Heart right ventricle (tissue), 16 donors: ENCODE measurements at regions of chr6 and their contacts with region 1.

Region 1: GRCh38 chr6:69542494-69542893 is 254.3 kb downstream of the LMBRD1 start:
- DNase-seq: no peak
- ATAC-seq: no peak
- H3K4me3 ChIP-seq: no peak overlapping the region
- H3K27ac ChIP-seq: no peak overlapping the region
- H3K4me1 ChIP-seq: no peaks in the 10 kb centered on the region
- H3K27me3 ChIP-seq: no peaks in the 10 kb centered on the region
- CTCF ChIP-seq: no peak

Region 2: DNA sequence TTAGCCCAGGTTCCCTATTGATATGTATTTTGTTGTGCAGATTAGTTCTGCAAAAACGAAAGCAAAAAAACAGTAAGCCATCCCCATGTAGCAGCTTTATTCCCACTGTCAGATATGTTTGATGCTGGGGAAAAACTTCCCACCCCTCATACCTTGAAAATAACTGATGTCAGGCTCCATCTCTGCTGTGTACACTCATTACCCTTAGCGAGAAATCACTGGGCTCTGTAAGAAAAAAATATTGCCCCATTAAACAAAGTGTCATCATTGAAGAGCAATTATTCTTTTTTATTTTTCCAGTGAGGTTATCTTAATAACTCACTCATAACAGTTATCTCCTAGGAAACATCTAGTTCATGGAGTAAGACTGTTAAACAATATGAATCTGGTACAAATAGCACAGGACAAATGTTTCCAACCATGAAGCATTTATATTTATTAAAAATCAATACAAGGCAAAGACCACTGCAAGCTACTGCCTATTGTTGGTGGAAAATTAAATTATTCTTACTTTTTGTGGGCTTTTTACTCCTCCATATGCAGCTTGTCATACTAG is 14.5 kb before region 1 on chr6:
- intact Hi-C with region 1: loop called in 1 of 10 experiments (anchors 1 kb)
- DNase-seq: no peak
- ATAC-seq: no peak
- H3K4me3 ChIP-seq: no peak overlapping the region
- H3K27ac ChIP-seq: no peak overlapping the region
- H3K4me1 ChIP-seq: no peaks in the 10 kb centered on the region
- H3K27me3 ChIP-seq: no peaks in the 10 kb centered on the region
- CTCF ChIP-seq: no peak